ENCODE measurements at regions of chr1 and their contacts with region 1.

Region 1: GRCh38 chr1:27136998-27137542 is 17.9 kb downstream of the SLC9A1 start:
- DNase-seq: no peak
- H3K4me3 ChIP-seq: no peak overlapping the region
- H3K27ac ChIP-seq: peak overlapping the region; percentile 16; the same call in 1 of the 2 replicates
- H3K4me1 ChIP-seq: peaks cover 8 to 25% (median 19%) of the 10 kb centered on the region in 4 experiments
- H3K27me3 ChIP-seq: no peaks in the 10 kb centered on the region
- CTCF ChIP-seq: no peak
- EP300 ChIP-seq: no peak
- POLR2A ChIP-seq: no peak
- RAD21 ChIP-seq: no peak

Region 2: DNA sequence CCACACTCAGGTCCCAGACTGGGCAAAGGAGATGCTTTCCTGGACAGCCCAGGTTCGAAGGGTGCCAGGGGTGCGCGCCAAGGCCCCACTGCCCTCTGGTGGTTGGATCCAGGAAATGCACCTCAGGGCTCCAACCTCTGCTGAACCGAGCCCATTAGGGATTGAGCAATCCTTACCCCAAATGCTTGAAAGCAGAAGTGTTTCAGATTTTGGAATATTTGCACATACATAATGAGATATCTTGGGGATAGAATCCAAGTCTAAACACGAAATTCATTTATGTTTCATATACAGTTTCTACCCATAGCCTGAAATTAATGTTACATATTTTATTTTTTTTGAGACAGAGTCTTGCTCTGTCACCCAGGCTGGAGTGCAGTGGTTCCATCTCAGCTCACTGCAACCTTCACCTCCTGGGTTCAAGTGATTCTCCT is 39.6 kb before region 1 on chr1:
- CTCF ChIA-PET with region 1: interaction called, 111 read pairs
- POLR2A ChIA-PET with region 1: interaction called, 9 read pairs
- DNase-seq: peak; percentile 38 to 93
- H3K4me3 ChIP-seq: no peak overlapping the region
- H3K27ac ChIP-seq: no peak overlapping the region
- H3K4me1 ChIP-seq: peaks cover 0 to 20% (median 13%) of the 10 kb centered on the region in 4 experiments; a peak in 6 of 7 replicates
- H3K27me3 ChIP-seq: no peaks in the 10 kb centered on the region
- CTCF ChIP-seq: peak in 2 of 3 experiments; percentile 96; a peak in 3 of 4 replicates
- EP300 ChIP-seq: no peak
- POLR2A ChIP-seq: no peak
- RAD21 ChIP-seq: peak; percentile 98 to 99

Region 3: GRCh38 chr1:27111626-27112573 is 25.2 kb before region 1 on chr1:
- CTCF ChIA-PET with region 1: interaction called, 166 read pairs
- POLR2A ChIA-PET with region 1: interaction called, 4 read pairs
- DNase-seq: no peak
- H3K4me3 ChIP-seq: no peak overlapping the region
- H3K27ac ChIP-seq: no peak overlapping the region
- H3K4me1 ChIP-seq: no peaks in the 10 kb centered on the region
- H3K27me3 ChIP-seq: no peaks in the 10 kb centered on the region
- CTCF ChIP-seq: peak in 1 of 3 experiments; percentile 20; a peak in 2 of 4 replicates
- EP300 ChIP-seq: no peak
- POLR2A ChIP-seq: no peak
- RAD21 ChIP-seq: peak in 1 of 2 experiments; percentile 43; a peak in 1 of 4 replicates

Region 4: DNA sequence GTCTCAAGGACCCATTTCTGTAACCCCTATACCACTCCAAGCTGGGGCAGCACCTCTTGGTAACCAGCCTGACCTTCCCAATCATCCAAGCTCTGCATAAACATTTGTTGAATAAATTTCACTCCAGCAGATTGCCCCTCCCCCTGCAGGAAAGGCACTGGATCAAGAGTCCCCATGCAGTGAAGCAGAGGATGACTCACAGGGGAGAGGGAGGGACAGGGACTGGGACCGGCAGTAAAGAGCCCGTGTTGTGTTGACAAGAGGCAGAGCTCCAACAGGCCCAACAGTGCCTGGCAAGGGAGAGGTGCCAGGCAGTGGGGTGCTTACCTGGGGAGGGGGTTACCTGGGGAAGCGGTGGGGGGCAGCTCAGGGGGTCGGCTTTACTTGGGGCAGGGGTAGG is 14.4 kb before region 1 on chr1:
- CTCF ChIA-PET with region 1: interaction called, 166 read pairs
- POLR2A ChIA-PET with region 1: interaction called, 4 read pairs
- DNase-seq: no peak
- H3K4me3 ChIP-seq: no peak overlapping the region
- H3K27ac ChIP-seq: no peak overlapping the region
- H3K4me1 ChIP-seq: peaks cover 0 to 9% (median 3%) of the 10 kb centered on the region in 4 experiments; a peak in 3 of 7 replicates
- H3K27me3 ChIP-seq: no peaks in the 10 kb centered on the region
- CTCF ChIP-seq: no peak
- EP300 ChIP-seq: no peak
- POLR2A ChIP-seq: no peak
- RAD21 ChIP-seq: no peak

Region 5: DNA sequence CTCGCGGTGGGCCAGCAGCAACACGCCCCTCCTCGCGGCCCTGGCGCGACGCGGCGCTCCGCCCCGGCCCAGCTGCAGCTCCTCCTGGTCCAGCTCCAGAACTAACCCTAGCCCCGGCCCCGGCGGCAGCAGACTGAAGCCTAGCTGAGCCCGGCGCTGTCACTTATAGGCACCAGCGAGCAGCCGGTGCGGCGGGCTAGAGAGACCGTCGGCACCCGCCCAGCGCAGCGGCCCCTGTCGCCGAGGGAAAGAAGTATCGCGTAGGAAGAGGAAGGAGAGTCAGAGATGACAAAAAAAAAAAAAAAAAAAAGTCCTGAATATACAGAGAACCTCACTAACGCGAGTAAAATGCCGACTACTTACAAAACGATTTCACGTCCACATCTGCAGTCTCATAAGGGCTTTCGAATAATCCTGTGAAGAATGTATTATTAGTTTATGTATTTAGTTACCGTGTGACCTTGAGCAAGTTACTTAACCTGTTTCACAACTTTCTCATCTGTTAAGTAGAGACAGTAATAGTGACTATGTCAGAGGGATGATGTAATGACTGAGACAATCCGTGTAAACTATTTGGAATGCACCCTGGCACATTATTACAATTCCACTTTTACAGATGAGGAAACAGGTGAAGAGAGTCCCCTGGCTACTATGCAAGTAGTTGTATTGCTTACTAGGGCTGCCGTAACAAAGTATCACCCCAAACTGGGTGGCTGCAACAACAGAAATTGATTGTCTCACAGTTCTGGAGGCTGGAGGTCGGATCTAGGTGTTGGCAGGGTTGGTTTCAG is 18.1 kb after region 1 on chr1 and contains the start of gene SLC9A1:
- CTCF ChIA-PET with region 1: interaction called, 151 read pairs
- POLR2A ChIA-PET with region 1: interaction called, 257 read pairs
- DNase-seq: peak; percentile 73 to 99
- H3K4me3 ChIP-seq: peak within 1 kb of the TSS; percentile 52 to 82 (median 70)
- H3K27ac ChIP-seq: peak within 1 kb of the TSS; percentile 26; the same call in 1 of the 2 replicates
- H3K4me1 ChIP-seq: peaks cover 2 to 15% (median 11%) of the 10 kb centered on the region in 4 experiments
- H3K27me3 ChIP-seq: no peaks in the 10 kb centered on the region; a peak in 1 of 7 replicates
- CTCF ChIP-seq: peak; percentile 77 to 89 (median 83)
- EP300 ChIP-seq: peak in 1 of 2 experiments; percentile 80; a peak in 1 of 3 replicates
- POLR2A ChIP-seq: peak; percentile 99 to 100
- RAD21 ChIP-seq: peak in 1 of 2 experiments; percentile 30; a peak in 2 of 4 replicates
- total RNA-seq, gene SLC9A1: 25.1 and 25.5 TPM in 2 replicates

Region 6: DNA sequence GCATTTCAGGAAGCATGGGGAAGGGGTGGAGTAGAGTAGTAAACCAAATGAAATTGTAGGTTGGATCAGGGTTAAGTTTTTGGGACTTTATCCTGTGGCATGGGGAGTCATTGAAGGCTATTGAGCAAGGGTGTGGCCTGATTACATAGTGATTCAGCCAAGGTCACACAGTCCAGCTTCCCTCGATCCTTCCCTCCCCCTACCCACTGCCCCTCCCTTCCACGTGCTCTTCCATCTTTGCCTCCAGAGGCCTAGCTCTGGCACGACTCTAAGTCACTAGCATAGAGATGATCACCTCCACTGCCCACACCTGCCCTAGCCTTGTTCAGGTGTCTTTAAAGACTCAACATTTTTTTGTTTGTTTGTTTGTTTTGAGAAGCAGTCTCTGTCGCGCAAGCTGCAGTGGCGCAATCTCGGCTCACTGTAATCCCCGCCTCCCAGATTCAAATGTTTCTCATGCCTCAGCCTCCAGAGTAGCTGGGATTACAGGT is 55.0 kb after region 1 on chr1:
- CTCF ChIA-PET with region 1: interaction called, 15 read pairs
- POLR2A ChIA-PET with region 1: no interaction called
- DNase-seq: no peak
- H3K4me3 ChIP-seq: no peak overlapping the region
- H3K27ac ChIP-seq: no peak overlapping the region
- H3K4me1 ChIP-seq: no peaks in the 10 kb centered on the region
- H3K27me3 ChIP-seq: no peaks in the 10 kb centered on the region
- CTCF ChIP-seq: no peak
- EP300 ChIP-seq: no peak
- POLR2A ChIP-seq: no peak
- RAD21 ChIP-seq: no peak

Region 7: GRCh38 chr1:27284425-27285273 is 147.6 kb after region 1 on chr1:
- CTCF ChIA-PET with region 1: interaction called, 18 read pairs
- POLR2A ChIA-PET with region 1: no interaction called
- DNase-seq: peak in 1 of 2 experiments; percentile 90
- H3K4me3 ChIP-seq: no peak overlapping the region
- H3K27ac ChIP-seq: no peak overlapping the region
- H3K4me1 ChIP-seq: no peaks in the 10 kb centered on the region
- H3K27me3 ChIP-seq: no peaks in the 10 kb centered on the region
- CTCF ChIP-seq: peak; percentile 76 to 81 (median 77)
- EP300 ChIP-seq: no peak
- POLR2A ChIP-seq: no peak
- RAD21 ChIP-seq: peak; percentile 74 to 75

Measured in H1 (cell line).